Head of caudate nucleus (tissue), 42 donors: ENCODE measurements at regions of chr6 and their contacts with region 1.

Region 1: DNA sequence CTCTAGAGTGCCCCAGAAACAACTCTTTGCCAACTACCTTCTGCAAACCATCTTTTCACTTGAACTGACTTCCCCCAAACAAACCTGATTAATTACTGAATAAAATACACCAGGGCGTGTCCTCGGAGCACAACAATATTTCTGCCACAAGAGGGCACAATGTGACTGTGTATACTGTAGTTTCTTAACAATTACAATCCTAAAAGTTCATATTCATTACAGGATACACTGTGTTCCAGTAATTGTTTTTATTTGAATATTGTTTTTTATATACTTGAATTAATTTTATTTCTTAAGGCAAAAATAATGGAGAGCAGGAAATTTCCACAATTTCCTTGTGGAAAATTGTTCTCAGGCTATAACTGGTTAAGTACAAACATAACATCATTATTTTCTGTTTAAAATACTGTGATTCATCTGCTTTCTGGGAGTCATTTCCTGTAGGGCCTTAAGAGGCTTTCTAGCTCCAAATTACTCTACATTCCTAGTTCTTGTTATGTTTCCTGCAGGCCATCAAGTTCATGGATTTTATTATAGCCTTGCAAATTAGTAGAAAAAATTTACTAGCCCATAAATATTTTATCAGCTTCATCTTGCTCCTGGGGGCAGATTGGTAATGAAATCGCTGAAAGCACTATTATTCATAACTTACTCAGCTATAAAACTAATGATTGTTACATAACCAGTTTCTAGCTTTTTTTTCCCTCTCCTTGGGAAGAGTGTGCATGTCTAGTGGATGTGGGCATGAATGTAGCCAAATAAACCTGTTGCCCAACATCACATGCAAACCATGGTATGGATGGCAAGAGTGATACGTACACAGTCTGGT is 51.9 kb upstream of the SLC22A16 start:
- DNase-seq: peak in 36 of 42 donors; percentile 23 to 89 (median 65)

Region 2: GRCh38 chr6:110815217-110816109 is 287.1 kb after region 1 on chr6 and contains the start of gene CDK19:
- intact Hi-C with region 1: loop called (anchors 10 kb)
- DNase-seq: peak; percentile 96 to 99 (median 98)

Region 3: GRCh38 chr6:110999634-111000270 is 471.4 kb after region 1 on chr6:
- intact Hi-C with region 1: loop called (anchors 10 kb)
- DNase-seq: no peak

Region 4: DNA sequence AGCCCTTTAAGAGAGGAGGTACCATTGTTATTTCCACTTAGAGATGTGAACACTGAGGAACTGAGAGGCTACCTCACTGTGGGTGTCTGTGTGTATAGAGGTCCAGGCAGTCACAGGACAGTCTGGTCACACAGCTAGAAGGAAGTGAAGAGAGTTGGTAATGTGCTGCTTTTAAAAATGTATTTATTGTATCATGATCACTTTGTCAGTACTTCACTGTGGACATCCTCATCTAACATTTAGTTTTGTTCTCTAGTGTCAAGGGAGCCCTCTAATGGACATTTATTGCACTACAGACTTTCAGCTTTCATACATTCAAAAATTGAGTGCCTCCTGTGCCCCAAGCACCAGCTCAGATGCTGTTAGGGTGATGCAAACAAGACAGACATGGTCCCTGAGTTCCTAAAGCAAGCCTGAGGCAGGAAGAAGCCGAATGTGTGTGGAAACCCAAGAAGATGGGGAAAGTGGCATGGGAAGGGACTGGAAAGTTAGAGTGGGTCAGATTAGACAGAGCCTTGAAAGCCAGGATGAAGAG is 681.9 kb after region 1 on chr6:
- intact Hi-C with region 1: loop called (anchors 10 kb)
- DNase-seq: peak in 5 of 42 donors; percentile 5 to 50 (median 8)